Left cardiac atrium (tissue), 4 donors: ENCODE measurements at regions of chr9 and their contacts with region 1.

Region 1: GRCh38 chr9:72827950-72828731 is 124.7 kb downstream of the ALDH1A1 start:
- DNase-seq: no peak
- ATAC-seq: no peak

Region 2: GRCh38 chr9:72280913-72281500 is 547.1 kb before region 1 on chr9:
- intact Hi-C with region 1: loop called (anchors 5 kb)
- DNase-seq: peak; percentile 74
- ATAC-seq: peak; percentile 77 to 85

Region 3: DNA sequence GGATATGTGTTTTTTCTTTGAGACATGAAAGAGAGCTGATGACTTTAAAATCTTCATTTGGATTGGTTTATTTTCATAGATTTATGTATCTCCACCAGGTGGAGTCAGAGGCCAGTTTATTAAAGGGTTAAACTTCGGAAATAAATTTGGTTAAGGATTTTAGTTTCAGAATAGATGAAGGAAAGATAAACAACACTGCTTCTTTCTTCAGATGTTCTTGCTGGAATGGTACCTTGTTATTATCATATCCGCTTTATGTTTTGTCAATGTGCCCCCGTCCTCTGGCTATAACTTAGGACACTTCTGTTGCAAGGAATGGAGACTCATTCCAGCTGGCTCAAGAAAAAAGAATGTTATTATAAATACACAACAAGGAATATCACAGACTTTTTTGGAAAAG is 43.5 kb after region 1 on chr9:
- intact Hi-C with region 1: no loop called
- DNase-seq: no peak
- ATAC-seq: no peak